Heart right ventricle (tissue), 16 donors: ENCODE measurements at regions of chr1 and their contacts with region 1.

Region 1: DNA sequence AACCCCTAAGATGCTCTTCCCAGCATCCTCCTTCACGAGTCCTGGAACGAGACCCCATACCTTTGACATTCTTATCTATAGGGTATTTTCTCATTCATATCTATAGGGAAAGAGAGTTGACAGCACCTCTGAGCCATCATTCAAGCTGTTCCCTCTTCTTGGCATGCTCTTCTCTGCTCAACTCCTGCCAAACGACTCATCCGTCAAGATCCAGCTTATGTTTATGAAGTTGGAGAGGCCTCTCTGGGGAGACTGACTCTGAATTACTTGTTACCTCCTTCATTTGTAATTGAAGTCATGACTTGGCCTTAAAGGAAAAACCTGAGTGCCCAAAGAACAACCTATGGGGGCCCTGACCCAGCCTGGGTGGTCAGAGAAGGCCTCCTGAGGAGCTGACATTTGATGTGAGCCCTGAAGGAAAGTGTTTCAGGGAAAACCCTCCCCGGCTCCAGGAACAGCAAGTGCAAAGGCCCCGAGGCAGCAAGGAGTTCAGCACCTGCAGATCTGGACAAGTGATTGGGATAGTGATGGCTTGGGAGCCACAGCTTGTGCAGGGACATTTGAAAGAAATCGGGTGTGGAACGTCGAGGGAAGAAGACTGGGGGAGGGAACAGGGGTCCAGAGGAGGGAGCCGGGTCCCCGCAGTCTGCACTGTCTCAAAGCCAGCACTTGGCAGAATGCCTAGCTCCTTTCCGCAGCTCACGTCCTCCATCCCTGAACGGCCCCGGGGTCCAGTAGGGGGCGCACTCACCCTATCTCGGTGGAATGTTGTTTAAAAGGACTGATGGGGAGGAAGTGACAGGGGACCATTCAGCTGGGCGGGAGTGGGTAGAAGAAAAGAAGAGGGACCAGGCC is 14.0 kb upstream of the CDA start:
- DNase-seq: peak; percentile 87 to 88
- ATAC-seq: peak; percentile 91 to 97 (median 96)
- H3K4me3 ChIP-seq: no peak overlapping the region
- H3K27ac ChIP-seq: no peak overlapping the region
- H3K4me1 ChIP-seq: peaks cover 0 to 5% (median 0%) of the 10 kb centered on the region in 9 donors
- H3K27me3 ChIP-seq: peaks cover 0 to 12% (median 2%) of the 10 kb centered on the region in 7 donors
- CTCF ChIP-seq: peak; percentile 62 to 89 (median 75)

Region 2: DNA sequence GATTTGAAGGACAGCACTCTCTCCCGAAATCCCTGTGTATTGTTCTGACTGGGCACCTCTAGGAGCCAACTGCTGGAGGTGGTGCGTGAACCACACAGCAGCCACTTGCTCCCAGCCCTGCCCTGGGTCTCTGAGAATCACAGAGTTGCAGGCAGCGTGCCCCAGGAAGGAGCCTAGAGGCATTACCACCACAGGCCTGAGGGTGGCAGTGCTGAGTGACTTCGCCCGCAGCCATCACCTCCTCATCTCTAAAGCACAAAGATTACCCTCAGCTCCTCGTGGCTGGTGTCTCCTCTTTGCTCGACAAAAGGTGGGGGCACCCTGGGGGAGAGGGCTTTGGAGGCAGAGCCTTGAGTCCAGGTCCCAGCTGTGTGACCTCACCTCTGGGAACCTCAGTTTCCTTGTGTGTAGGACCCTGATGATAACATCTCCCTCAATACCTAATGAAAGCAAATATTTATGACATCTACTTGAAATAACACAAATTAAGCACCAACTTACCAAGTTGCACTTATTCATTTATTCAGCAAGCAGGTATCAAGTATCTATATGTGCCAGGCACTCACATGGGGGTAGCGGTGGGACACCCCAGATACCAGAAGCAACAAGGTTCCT is 197.9 kb before region 1 on chr1:
- intact Hi-C with region 1: no loop called
- DNase-seq: peak; percentile 16 to 53
- ATAC-seq: peak in 3 of 8 donors; percentile 44 to 64 (median 62)
- H3K4me3 ChIP-seq: no peak overlapping the region
- H3K27ac ChIP-seq: no peak overlapping the region
- H3K4me1 ChIP-seq: peaks cover 0 to 5% (median 0%) of the 10 kb centered on the region in 9 donors
- H3K27me3 ChIP-seq: peaks cover 0 to 85% (median 27%) of the 10 kb centered on the region in 7 donors
- CTCF ChIP-seq: peak; percentile 26 to 84 (median 74)

Region 3: GRCh38 chr1:20528221-20528620 is 46.7 kb before region 1 on chr1:
- intact Hi-C with region 1: loop called in 3 of 10 experiments (anchors 5 to 10 kb)
- DNase-seq: no peak
- ATAC-seq: no peak
- H3K4me3 ChIP-seq: no peak overlapping the region
- H3K27ac ChIP-seq: no peak overlapping the region
- H3K4me1 ChIP-seq: no peaks in the 10 kb centered on the region
- H3K27me3 ChIP-seq: peaks cover 0 to 45% (median 25%) of the 10 kb centered on the region in 7 donors
- CTCF ChIP-seq: no peak

Region 4: GRCh38 chr1:20633190-20634064 is 58.5 kb after region 1 on chr1 and contains the start of gene PINK1:
- intact Hi-C with region 1: loop called in 8 of 10 experiments (anchors 1 to 5 kb)
- DNase-seq: peak; percentile 76 to 85
- ATAC-seq: peak; percentile 84 to 95 (median 94)
- H3K4me3 ChIP-seq: peak within 1 kb of the TSS; percentile 89 to 100 (median 96)
- H3K27ac ChIP-seq: peak within 1 kb of the TSS; percentile 93 to 99 (median 98)
- H3K4me1 ChIP-seq: peaks cover 2 to 38% (median 27%) of the 10 kb centered on the region in 9 donors
- H3K27me3 ChIP-seq: peaks cover 0 to 4% (median 0%) of the 10 kb centered on the region in 7 donors
- CTCF ChIP-seq: peak; percentile 95 to 100 (median 99)
- total RNA-seq, gene PINK1: 180 to 315 (median 244) TPM

Region 5: DNA sequence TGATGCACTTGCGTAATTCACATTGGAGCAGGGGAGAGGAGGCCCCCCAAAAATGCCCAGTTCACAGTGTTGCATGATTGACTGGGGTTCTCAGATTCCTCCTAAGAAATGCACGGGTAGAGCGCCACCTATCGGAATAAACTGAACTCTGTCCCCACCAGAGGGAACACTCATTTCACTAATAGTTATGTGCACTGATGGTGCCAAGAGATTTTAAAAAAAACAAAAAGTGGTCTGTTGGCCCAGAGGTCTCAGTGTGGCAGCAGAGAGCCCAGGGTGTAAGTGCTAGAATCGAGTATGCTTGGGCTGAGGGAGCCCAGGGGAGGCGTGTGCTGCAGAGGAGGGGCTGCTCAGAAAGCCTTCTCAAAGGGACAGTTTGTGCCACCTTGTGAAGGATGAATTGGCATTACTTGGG is 65.3 kb after region 1 on chr1:
- intact Hi-C with region 1: loop called in 2 of 10 experiments (anchors 2 to 5 kb)
- DNase-seq: peak in 1 of 2 donors; percentile 37
- ATAC-seq: peak in 7 of 8 donors; percentile 39 to 69 (median 63)
- H3K4me3 ChIP-seq: no peak overlapping the region
- H3K27ac ChIP-seq: no peak overlapping the region
- H3K4me1 ChIP-seq: peaks cover 2 to 25% (median 11%) of the 10 kb centered on the region in 9 donors
- H3K27me3 ChIP-seq: no peaks in the 10 kb centered on the region
- CTCF ChIP-seq: peak; percentile 74 to 87 (median 83)

Region 6: DNA sequence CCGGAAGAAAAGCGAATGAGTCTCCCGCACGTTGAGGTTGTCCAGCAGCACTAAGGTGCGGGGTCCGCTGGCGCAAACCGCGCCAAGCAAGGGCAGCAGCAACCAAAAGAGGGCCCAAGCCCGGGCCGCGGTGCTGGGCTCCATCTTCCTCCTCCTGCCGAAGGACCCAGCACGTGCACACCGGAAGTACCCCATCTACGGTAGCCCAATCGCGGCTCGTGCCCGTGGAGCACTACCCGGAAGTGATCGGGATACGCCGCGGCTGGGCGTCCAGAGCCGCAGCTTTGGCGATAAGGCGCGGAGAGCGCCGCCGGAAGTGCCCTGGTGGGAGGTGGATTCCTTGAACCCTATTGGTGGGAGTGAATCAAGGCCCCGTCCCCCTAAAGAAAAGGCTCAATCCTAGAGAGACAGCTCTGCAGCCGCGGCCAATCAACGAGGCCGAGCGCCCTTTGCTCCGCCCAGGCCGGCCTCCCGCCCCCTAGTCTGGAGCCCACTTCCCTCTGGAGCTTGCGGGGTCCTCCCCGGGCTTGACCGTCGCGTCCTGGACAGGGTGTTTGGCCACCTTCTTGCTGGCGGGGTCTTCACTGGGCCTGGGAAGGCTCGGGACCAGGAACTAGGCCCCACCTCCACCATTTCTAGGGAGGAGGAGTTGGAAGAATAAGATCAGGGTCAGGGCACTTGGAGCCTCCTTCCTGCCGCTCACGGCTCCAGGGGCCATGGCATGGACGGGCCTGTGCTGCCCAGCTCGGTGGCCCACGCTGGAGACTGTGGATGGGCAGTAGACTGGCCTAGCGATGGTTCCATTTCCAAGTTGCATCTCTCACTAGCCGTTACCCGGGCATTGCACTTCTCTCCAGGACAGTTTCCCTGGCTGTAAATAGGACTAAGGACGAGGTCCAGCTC is 86.5 kb after region 1 on chr1 and contains the start of gene DDOST:
- intact Hi-C with region 1: no loop called
- DNase-seq: peak; percentile 96
- ATAC-seq: peak; percentile 94 to 97 (median 96)
- H3K4me3 ChIP-seq: peak within 1 kb of the TSS; percentile 65 to 97 (median 82)
- H3K27ac ChIP-seq: peak within 1 kb of the TSS; percentile 70 to 94 (median 90)
- H3K4me1 ChIP-seq: peaks cover 4 to 65% (median 44%) of the 10 kb centered on the region in 9 donors
- H3K27me3 ChIP-seq: no peaks in the 10 kb centered on the region
- CTCF ChIP-seq: peak in 8 of 9 donors; percentile 18 to 79 (median 50)
- total RNA-seq, gene DDOST: 104 to 178 (median 124) TPM